CD4-positive, alpha-beta T cell (primary cell): ENCODE measurements at regions of chr9 and their contacts with region 1.

Region 1: DNA sequence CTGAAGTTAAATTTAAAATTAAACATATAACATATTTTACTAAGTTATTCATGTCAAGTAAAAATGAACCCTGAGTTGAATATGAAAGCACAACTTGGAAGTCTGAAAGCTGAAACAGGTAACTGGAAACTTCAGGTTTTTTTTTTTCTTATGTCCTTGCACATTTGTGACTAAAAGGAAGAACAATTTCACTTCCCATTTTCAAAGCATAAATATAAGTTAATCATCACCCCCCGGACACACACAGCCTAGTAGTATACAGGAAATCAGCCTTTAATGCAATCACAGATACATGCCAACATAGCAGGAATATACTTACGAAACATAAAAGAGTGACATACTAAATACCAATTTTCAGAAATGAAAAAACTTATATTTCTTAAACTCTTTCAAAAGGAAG is 225.9 kb downstream of the RFX3 start:
- DNase-seq: peak in 3 of 14 experiments; percentile 2 to 13 (median 13)
- ATAC-seq: no peak
- H3K4me3 ChIP-seq: no peak overlapping the region
- H3K4me3 Mint-ChIP-seq: no peak overlapping the region
- H3K27ac ChIP-seq: no peak overlapping the region
- H3K27ac Mint-ChIP-seq: no peak overlapping the region
- H3K4me1 ChIP-seq: no peaks in the 10 kb centered on the region
- H3K4me1 Mint-ChIP-seq: no peaks in the 10 kb centered on the region
- H3K27me3 ChIP-seq: no peaks in the 10 kb centered on the region
- H3K27me3 Mint-ChIP-seq: no peaks in the 10 kb centered on the region
- CTCF ChIP-seq: no peak

Region 2: DNA sequence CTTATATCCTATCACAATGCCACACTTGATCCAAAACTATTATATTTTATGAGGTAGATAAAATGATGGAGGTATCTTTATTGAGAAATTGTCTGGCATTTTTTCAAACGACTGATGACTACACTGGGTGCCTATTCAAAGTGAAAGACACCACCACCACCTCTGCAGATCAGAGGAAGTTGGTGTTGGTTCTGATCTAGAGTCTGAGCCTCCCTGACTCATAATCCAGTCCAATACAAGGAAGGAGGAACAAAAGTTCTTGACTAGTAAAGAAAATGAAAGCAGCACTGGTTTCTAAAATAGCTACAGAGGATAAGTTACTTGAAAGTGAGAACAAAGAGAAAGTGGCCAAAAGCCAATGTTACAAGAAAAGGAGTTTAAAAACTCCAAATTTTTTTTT is 86.0 kb after region 1 on chr9:
- CTCF ChIA-PET with region 1: no interaction called
- POLR2A ChIA-PET with region 1: no interaction called
- intact Hi-C with region 1: loop called in 1 of 2 experiments (anchors 10 kb)
- DNase-seq: peak in 3 of 14 experiments; percentile 18 to 28 (median 19)
- ATAC-seq: no peak
- H3K4me3 ChIP-seq: no peak overlapping the region
- H3K4me3 Mint-ChIP-seq: no peak overlapping the region
- H3K27ac ChIP-seq: no peak overlapping the region
- H3K27ac Mint-ChIP-seq: no peak overlapping the region
- H3K4me1 ChIP-seq: no peaks in the 10 kb centered on the region
- H3K4me1 Mint-ChIP-seq: peaks cover 36% of the 10 kb centered on the region
- H3K27me3 ChIP-seq: no peaks in the 10 kb centered on the region
- H3K27me3 Mint-ChIP-seq: no peaks in the 10 kb centered on the region
- CTCF ChIP-seq: no peak

Region 3: DNA sequence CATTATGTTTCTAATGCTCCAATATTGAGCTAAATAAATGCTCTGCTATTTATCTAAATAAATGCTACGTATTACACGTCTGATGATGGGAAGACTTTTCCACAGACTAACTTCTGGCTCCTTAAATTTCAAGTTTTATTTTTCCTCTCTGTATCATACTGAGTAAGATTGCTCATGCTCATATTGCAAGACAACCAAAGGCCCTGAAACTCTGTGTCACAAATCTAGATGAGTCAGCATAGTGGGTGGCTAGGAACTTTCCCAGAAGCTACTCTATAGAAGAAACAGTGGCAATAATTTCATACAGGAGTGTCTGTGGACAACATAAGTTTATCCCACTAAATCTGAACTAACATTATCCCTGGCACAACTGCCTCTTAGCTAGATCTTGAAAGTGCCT is 278.9 kb after region 1 on chr9:
- CTCF ChIA-PET with region 1: no interaction called
- POLR2A ChIA-PET with region 1: no interaction called
- intact Hi-C with region 1: no loop called
- DNase-seq: peak in 2 of 14 experiments; percentile 13 to 34
- ATAC-seq: no peak
- H3K4me3 ChIP-seq: no peak overlapping the region
- H3K4me3 Mint-ChIP-seq: no peak overlapping the region
- H3K27ac ChIP-seq: no peak overlapping the region
- H3K27ac Mint-ChIP-seq: no peak overlapping the region
- H3K4me1 ChIP-seq: no peaks in the 10 kb centered on the region
- H3K4me1 Mint-ChIP-seq: no peaks in the 10 kb centered on the region
- H3K27me3 ChIP-seq: no peaks in the 10 kb centered on the region
- H3K27me3 Mint-ChIP-seq: no peaks in the 10 kb centered on the region
- CTCF ChIP-seq: no peak